PC-9 (cell line): ENCODE measurements at regions of chr3 and their contacts with region 1.

Region 1: GRCh38 chr3:192772240-192772894 is 45.0 kb upstream of the FGF12 start:
- DNase-seq: peak; percentile 43 to 53
- H3K4me3 ChIP-seq: no peak overlapping the region
- H3K27ac ChIP-seq: no peak overlapping the region
- H3K4me1 ChIP-seq: no peaks in the 10 kb centered on the region
- H3K27me3 ChIP-seq: no peaks in the 10 kb centered on the region
- CTCF ChIP-seq: peak; percentile 80

Region 2: GRCh38 chr3:192467230-192468140 is 304.9 kb before region 1 on chr3:
- CTCF ChIA-PET with region 1: no interaction called
- POLR2A ChIA-PET with region 1: no interaction called
- intact Hi-C with region 1: loop called (anchors 1 kb)
- DNase-seq: peak; percentile 56 to 63
- H3K4me3 ChIP-seq: no peak overlapping the region
- H3K27ac ChIP-seq: no peak overlapping the region
- H3K4me1 ChIP-seq: no peaks in the 10 kb centered on the region
- H3K27me3 ChIP-seq: no peaks in the 10 kb centered on the region
- CTCF ChIP-seq: peak; percentile 100

Region 3: DNA sequence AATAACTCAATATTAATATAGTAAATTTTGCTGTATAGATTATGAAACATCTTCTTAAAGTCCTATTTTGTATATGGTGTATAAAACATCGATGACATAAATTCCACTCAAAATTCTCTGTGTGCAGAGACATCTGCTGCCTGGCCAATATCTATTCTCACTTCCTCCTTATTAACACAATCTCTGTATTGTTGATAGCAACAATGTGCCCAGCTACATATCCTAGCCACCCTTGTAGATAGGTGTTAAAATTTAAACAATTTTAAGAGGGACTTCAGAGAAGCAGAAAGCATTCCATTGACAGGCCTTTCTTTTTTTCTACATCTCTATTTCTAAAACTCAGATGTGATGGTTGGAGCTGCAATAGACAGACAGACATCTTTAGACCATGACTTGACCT is 117.3 kb before region 1 on chr3:
- CTCF ChIA-PET with region 1: no interaction called
- POLR2A ChIA-PET with region 1: no interaction called
- intact Hi-C with region 1: no loop called
- DNase-seq: no peak
- H3K4me3 ChIP-seq: no peak overlapping the region
- H3K27ac ChIP-seq: no peak overlapping the region
- H3K4me1 ChIP-seq: no peaks in the 10 kb centered on the region
- H3K27me3 ChIP-seq: no peaks in the 10 kb centered on the region
- CTCF ChIP-seq: no peak

Region 4: DNA sequence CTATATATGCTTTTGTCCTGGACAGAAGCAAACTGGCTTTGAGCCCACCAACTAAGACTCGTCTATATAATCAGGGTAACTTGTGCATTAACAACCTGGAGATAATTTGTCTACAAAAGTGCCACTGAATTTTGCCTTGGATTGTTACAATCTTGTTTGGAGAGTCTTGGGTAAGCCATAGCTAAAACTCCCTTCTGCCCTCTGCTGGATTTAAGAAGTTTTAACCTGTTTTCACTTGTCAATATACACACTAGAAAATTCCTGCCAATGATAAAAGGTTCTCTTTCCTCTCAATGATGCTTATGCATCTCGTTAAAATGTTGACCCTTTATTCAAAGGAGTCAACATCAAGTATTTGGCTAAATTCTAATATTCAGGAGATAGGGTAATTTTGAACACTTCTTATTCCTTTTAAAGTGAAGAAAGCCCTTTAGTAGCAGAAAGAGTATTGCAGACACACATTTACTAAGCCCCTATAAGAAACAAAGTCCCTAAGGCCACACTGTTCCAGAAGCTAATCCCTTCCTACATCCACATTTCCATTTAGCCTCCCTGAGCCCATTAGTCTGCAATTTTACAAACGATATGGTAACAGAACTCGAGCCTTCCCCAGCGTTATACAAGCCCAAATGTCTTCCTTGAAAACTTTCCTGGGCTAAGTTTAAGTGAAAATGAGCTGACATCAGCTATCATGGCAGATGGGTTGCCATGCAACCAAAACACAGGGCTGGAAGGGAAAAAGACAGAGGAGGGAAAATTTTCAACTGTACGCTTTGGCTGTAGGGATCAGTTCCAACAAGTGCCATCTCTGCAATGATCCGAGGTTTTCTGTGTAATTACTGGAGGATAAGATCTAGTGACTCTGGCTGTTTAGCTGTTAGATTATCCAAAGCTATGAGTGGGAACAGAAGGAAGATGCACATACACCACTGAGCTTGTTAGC is 30.9 kb after region 1 on chr3:
- CTCF ChIA-PET with region 1: no interaction called
- POLR2A ChIA-PET with region 1: no interaction called
- intact Hi-C with region 1: loop called (anchors 1 kb)
- DNase-seq: peak in 1 of 2 experiments; percentile 45
- H3K4me3 ChIP-seq: no peak overlapping the region
- H3K27ac ChIP-seq: no peak overlapping the region
- H3K4me1 ChIP-seq: no peaks in the 10 kb centered on the region
- H3K27me3 ChIP-seq: no peaks in the 10 kb centered on the region
- CTCF ChIP-seq: peak; percentile 88

Region 5: DNA sequence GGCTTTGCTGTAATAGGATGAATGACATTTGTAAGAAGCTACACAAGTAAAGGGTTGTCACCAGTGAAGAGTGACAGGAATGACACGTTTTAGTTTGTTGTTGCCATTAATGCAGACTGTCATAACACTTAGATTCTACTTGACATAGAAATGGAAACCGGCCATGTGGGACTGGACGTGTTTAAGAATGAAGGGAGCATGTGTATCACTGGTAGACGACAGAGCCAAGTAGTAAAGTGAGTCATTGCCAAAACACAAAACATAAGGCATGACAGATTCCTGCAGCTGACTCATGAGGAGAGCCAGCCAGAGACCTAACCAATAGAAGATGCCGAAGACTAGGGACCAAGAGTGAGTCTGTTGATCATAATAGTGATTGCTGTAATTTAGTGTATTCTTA is 362.5 kb after region 1 on chr3:
- CTCF ChIA-PET with region 1: no interaction called
- POLR2A ChIA-PET with region 1: interaction called, 11 read pairs
- intact Hi-C with region 1: no loop called
- DNase-seq: no peak
- H3K4me3 ChIP-seq: no peak overlapping the region
- H3K27ac ChIP-seq: no peak overlapping the region
- H3K4me1 ChIP-seq: no peaks in the 10 kb centered on the region
- H3K27me3 ChIP-seq: peaks cover 12% of the 10 kb centered on the region; the same call in 1 of the 2 replicates
- CTCF ChIP-seq: no peak